Naive thymus-derived CD8-positive, alpha-beta T cell (primary cell): ENCODE measurements at regions of chr21 and their contacts with region 1.

Region 1: DNA sequence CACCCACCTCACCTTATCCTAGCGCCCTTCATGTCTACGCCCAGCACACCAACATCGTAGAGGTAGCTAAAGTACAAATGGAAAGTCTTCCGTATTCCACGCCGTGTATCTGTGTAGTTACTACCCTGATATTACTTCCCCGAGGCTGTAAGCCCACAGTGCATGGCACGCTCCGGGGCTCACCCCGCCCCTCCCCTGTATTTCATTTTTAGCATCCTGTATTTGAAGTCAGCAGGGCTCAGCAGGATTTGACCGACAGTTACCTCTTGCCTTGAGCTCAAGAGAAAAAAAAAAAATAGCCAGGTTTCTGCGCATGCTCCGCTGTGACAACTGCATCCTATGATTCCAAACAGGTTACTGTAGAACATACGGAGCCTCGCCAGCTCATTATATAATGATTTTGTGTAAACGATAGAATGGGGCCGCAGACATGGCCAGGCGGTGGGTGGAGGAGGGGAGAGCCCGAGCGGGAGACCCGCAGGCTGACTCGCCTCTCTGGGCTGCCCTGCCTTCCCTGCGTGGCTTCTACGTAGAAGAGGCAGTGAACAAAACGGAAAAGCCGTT is 1.3 kb downstream of the ABCG1 start:
- DNase-seq: peak; percentile 60 to 93 (median 88)
- ATAC-seq: peak; percentile 84 to 91
- H3K4me3 Mint-ChIP-seq: peak overlapping the region; percentile 85 to 99 (median 95)
- H3K27ac Mint-ChIP-seq: peak overlapping the region; percentile 91 to 97 (median 94)
- H3K4me1 Mint-ChIP-seq: peaks cover 19 to 54% (median 39%) of the 10 kb centered on the region in 4 donors
- H3K27me3 Mint-ChIP-seq: no peaks in the 10 kb centered on the region

Region 2: DNA sequence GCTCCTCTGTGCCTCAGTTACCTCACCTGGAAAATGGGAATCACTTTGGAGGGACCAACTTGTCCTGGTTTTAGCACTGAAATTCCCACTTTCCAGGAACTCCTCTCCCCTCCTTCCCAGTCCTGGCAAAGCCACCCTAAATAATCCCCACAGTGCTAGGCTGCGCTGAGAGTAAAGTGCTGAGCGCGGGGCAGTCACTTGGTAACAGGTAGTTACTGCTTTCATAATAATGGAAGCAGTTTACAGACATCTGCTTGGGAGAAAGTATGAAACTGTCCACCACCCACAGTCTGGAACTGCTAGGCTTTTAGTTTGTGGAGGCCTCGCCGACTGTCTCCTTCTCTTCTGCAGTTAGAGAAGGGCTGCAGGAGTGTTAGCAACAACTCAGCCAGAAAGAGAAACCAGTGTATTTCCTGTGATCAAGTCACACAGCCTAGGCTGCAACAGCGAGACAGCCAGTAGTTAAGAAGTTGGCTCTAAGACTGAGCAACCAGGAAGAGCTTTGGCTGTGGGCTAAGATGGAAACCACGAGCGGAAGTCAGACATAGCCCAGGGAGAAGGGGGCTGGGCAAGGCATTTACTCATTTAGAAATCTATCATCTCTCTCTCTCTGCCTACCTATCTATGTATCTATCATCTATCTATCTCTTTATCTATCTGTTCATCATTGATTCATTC is 32.1 kb before region 1 on chr21:
- POLR2A ChIA-PET with region 1: interaction called, 27 read pairs
- DNase-seq: peak; percentile 51 to 91 (median 78)
- ATAC-seq: peak; percentile 92 to 93
- H3K4me3 Mint-ChIP-seq: peak overlapping the region; percentile 63 to 85 (median 77)
- H3K27ac Mint-ChIP-seq: peak overlapping the region; percentile 96 to 99 (median 97)
- H3K4me1 Mint-ChIP-seq: peaks cover 22 to 70% (median 41%) of the 10 kb centered on the region in 4 donors
- H3K27me3 Mint-ChIP-seq: no peaks in the 10 kb centered on the region

Region 3: DNA sequence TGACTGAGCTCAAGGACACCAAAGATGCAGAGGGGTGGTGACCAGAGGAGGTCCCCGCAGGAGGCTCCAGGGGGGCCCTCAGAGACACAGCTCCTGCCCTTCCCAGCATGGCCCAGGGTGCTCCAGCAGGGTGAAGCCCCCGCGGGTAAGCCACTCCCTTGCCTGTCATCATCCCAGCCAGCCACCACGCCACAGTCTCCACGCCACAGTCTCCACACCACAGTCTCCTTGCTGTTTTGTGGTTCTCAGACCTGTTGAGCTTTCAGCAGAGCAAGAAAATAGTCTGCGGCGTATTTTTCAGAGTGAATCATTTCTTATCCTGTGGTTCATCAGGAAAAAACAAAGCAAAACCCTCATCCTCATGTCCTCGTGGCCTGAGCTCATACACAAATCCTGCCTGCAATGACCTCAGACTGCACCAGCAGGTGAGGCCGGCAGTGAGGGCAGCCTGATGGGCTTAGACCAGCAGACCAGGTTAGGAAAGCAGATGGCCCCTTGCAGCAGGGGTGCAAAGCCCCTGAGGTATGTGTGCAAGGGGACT is 27.0 kb before region 1 on chr21:
- POLR2A ChIA-PET with region 1: interaction called, 27 read pairs
- DNase-seq: peak; percentile 35 to 77 (median 66)
- ATAC-seq: peak; percentile 66 to 70
- H3K4me3 Mint-ChIP-seq: peak overlapping the region; percentile 38 to 84 (median 72)
- H3K27ac Mint-ChIP-seq: peak overlapping the region; percentile 77 to 98 (median 88)
- H3K4me1 Mint-ChIP-seq: peaks cover 43 to 82% (median 66%) of the 10 kb centered on the region in 4 donors
- H3K27me3 Mint-ChIP-seq: no peaks in the 10 kb centered on the region

Region 4: GRCh38 chr21:42199488-42200458 is 20.4 kb before region 1 on chr21:
- POLR2A ChIA-PET with region 1: interaction called, 20 read pairs
- DNase-seq: peak in 4 of 10 donors; percentile 30 to 60 (median 47)
- ATAC-seq: peak; percentile 67 to 81
- H3K4me3 Mint-ChIP-seq: peak overlapping the region in 9 of 10 donors; percentile 26 to 72 (median 67)
- H3K27ac Mint-ChIP-seq: peak overlapping the region; percentile 45 to 93 (median 88)
- H3K4me1 Mint-ChIP-seq: peaks cover 34 to 70% (median 65%) of the 10 kb centered on the region in 4 donors
- H3K27me3 Mint-ChIP-seq: no peaks in the 10 kb centered on the region

Region 5: DNA sequence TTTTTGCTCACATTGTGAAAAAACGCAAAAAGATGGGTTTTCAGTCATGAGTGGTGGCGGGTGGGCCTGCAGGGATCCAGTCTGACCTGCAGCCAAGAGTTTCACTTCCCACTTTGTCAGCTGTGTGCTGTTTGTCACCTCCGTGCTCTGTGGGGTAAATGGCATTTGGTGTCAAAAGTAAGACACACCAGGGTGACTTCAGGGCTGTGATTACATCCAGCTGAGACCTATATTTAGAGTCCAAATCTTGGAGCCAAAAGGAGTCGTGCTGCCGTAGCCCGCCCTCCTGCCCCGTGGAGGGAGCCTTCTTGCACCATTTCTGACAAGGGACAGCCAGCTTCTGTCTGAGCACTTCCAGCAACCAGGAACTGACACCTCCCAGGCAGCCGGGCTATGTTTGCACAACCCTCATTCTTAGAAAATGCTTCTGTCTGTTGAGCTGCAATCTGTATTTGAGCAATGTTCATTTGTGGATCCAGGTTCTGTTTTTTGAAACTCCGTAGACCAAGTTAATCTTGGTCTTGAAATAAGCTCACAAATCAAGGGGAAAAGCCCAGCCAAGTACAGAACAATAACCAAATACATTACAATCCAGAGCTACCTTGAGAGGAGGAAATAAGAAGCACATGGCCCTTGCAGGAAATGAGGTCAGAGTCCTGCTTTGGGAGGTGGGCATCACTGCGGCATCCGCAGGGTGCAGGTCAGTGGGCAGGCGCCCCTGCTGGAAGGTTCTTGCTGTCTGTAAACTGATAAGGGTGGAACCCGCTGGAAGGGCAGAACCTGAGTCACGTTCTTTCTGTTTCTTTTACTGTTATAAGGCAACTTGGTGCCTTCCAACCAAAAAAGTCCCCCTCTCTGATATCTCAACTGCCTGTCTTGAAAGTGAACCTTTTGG is 13.1 kb after region 1 on chr21:
- POLR2A ChIA-PET with region 1: interaction called, 45 read pairs
- DNase-seq: peak; percentile 60 to 88 (median 83)
- ATAC-seq: peak; percentile 51 to 65
- H3K4me3 Mint-ChIP-seq: peak overlapping the region; percentile 65 to 87 (median 78)
- H3K27ac Mint-ChIP-seq: peak overlapping the region; percentile 78 to 98 (median 93)
- H3K4me1 Mint-ChIP-seq: peaks cover 36 to 97% (median 96%) of the 10 kb centered on the region in 4 donors
- H3K27me3 Mint-ChIP-seq: no peaks in the 10 kb centered on the region

Region 6: DNA sequence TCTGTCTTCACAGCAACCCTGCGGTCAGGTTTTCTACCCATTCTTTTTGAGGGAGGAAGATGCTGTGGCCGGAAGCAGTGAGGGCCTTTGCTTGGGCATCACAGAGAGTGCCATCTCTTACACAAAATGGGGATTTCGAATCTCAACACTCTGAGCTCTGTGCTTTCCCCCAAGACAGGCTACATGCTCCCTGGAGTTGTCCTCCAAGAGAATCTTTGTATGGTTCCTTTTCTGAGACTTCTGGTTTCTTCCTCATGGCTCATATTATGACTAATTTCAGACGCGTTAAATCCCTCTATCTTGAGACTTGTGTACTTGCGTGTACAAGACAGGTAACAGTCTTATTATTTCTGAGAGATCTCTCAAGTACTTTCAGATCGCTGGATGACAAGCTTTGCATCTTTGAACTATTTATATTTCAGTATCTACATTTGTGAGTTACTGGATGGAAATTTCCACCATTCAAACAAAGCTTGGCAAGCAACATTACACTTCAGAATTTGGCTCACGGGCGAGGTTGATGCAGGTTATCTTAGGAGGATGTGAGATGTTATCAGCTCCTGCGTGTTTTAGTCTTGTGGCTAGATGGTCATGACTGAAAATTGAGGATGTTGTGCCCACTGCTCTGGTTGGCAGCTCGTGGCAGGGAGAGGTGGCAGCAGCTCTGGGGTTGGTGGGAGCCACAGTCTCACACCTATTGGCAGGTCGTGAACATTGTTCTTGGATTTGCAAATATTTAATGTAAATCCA is 18.1 kb after region 1 on chr21:
- POLR2A ChIA-PET with region 1: interaction called, 45 read pairs
- DNase-seq: peak in 8 of 10 donors; percentile 50 to 79 (median 70)
- ATAC-seq: peak; percentile 33 to 55
- H3K4me3 Mint-ChIP-seq: peak overlapping the region; percentile 19 to 84 (median 68)
- H3K27ac Mint-ChIP-seq: peak overlapping the region; percentile 65 to 98 (median 95)
- H3K4me1 Mint-ChIP-seq: peaks cover 34 to 82% (median 73%) of the 10 kb centered on the region in 4 donors
- H3K27me3 Mint-ChIP-seq: no peaks in the 10 kb centered on the region